Panc1 (cell line): ENCODE measurements at regions of chr9 and their contacts with region 1.

Region 1: DNA sequence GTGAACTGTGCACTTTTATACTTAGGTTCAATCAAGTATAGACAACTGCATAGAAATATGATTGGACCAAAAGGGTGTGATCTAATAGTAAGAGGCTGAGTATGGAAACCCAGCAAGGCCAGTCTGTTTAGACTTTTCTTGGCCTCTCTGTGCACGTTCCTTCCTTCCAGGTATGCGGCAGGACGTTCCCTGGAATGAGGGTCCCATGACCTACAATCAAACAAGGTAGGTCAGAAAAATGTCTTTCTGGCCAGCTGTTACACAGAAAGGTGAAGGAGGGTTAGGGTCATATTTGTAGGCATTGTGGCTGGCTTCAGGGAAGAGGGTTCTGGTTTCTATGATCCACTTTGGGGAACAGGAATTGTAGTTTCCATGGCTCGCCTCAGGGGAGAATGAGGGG is 84.9 kb downstream of the C9orf50 start:
- DNase-seq: no peak
- ATAC-seq: no peak
- H3K4me3 ChIP-seq: no peak overlapping the region
- H3K27ac ChIP-seq: no peak overlapping the region
- H3K4me1 ChIP-seq: no peaks in the 10 kb centered on the region
- H3K27me3 ChIP-seq: no peaks in the 10 kb centered on the region
- CTCF ChIP-seq: no peak

Region 2: DNA sequence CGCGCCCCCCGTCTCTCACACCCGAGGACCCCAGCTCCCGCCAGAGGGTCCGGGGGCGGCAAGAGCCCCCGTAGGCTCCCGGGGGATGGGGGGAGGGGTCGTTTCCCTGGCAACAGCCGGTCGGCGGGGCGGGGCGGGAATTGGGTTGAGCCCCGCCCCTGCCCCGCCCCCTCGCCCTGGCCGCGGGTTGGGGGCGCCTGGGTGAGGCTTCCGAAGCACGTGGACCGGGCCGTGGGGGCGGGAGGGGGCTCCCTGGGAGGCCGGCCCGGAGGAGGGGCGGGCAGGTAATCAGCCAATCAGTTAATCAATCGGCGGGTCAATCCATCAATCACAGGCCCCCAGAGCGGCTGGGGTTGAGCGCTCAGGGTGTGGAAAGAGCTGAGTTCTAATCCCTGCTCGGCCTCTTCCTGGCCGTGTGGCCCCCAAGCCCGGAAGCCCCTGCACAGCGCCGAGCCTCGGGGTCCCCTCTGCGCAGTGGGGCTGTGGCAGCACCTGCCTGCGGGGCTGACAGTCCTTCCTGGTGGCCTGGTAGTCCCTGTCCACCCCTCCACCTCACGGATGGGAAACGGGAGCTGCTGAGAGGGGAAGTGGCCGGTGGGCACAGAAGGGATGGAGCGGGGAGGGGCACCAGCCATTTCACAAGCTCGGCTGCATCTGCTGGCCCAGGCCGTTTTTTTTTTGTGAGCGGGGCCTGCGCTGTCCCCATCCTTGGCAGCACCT is 183.7 kb before region 1 on chr9:
- CTCF ChIA-PET with region 1: no interaction called
- POLR2A ChIA-PET with region 1: interaction called, 13 read pairs
- in situ Hi-C with region 1: no loop called
- intact Hi-C with region 1: no loop called
- DNase-seq: no peak
- ATAC-seq: peak; percentile 2; the same call in 1 of the 2 replicates
- H3K4me3 ChIP-seq: peak overlapping the region; percentile 43 to 48
- H3K27ac ChIP-seq: peak overlapping the region; percentile 88
- H3K4me1 ChIP-seq: peaks cover 29% of the 10 kb centered on the region
- H3K27me3 ChIP-seq: no peaks in the 10 kb centered on the region
- CTCF ChIP-seq: no peak

Region 3: GRCh38 chr9:129380961-129381401 is 155.1 kb before region 1 on chr9:
- CTCF ChIA-PET with region 1: no interaction called
- POLR2A ChIA-PET with region 1: no interaction called
- in situ Hi-C with region 1: no loop called
- intact Hi-C with region 1: no loop called
- DNase-seq: no peak
- ATAC-seq: no peak
- H3K4me3 ChIP-seq: no peak overlapping the region
- H3K27ac ChIP-seq: no peak overlapping the region
- H3K4me1 ChIP-seq: peaks cover 10% of the 10 kb centered on the region
- H3K27me3 ChIP-seq: no peaks in the 10 kb centered on the region
- CTCF ChIP-seq: no peak

Region 4: DNA sequence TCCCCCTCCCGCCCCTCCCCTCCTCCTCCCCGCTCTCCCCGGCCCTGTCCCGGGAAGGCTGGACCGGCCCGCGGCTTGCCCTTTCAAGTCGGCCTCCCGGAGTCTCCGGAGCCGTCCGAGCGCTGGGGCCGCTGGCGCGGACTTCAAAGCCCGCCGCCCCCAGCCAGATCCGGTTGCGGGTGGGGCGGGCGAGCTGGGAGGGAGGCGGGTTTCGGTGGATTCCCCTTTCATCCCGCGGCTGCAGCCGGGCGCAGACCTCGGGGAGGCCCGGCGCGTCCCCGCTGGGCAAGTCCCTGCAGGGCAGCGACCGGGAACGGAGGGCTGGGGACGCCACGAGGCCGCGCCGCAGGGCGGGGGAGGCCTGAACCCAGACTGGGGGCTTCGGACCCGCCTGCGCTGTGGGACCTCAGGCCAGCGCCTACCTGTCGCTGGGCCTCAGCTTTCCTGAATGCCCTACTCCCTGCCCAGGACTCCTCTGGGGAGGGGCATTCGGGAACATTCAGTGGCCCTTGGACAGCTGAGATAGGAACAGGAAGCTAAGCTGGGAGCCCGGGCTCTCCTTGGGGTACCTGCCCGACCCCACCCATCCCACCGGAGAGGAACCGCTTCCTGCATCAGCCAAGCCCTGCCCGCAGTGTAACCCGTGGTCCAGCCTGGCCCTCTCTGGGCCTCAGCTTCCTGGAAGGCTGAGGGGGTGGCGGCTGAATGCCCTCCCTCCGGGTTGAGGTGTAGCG is 61.5 kb after region 1 on chr9:
- CTCF ChIA-PET with region 1: no interaction called
- POLR2A ChIA-PET with region 1: no interaction called
- in situ Hi-C with region 1: no loop called
- intact Hi-C with region 1: loop called (anchors 2 kb)
- DNase-seq: no peak
- ATAC-seq: peak; percentile 75
- H3K4me3 ChIP-seq: peak overlapping the region; percentile 15 to 33; a peak in 3 of 4 replicates
- H3K27ac ChIP-seq: no peak overlapping the region; the same call in 1 of the 2 replicates
- H3K4me1 ChIP-seq: peaks cover 3% of the 10 kb centered on the region
- H3K27me3 ChIP-seq: no peaks in the 10 kb centered on the region
- CTCF ChIP-seq: no peak

Region 5: DNA sequence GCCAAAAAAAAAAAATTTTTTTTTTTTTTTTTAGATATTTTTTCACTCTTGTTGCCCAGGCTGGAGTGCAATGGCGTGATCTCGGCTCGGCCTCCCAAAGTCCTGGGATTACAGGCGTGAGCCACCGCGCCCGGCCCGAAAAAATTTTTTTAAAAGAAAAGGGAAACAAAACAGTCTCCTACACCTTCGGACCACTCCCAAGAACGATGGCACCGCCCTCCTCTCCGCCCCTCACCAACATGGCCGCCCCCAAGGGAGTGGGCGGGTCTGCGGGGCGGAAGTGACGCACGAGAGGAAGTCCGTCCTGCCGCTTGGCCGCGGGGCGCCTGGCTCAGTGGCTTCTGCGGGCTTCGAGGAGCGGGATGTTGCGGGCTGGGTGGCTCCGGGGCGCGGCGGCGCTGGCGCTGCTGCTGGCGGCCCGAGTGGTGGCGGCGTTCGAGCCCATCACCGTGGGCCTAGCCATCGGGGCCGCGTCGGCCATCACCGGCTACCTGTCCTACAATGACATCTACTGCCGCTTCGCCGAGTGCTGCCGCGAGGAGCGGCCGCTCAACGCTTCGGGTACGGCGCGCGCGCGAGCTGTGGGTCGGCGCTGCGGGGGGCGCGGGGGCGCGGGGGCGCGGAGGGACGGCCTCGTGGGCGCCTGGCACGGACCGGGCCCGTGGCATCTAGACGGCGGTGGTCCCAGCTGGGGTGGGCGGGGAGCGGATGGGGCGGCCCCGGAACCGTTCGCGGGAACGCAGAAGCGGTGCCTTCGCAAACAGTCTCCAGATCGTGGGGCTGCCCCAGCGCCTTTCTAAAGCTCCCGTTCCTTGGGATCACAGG is 267.0 kb after region 1 on chr9 and contains the start of gene TOR1B:
- CTCF ChIA-PET with region 1: no interaction called
- POLR2A ChIA-PET with region 1: no interaction called
- in situ Hi-C with region 1: no loop called
- intact Hi-C with region 1: no loop called
- DNase-seq: peak; percentile 51
- ATAC-seq: peak; percentile 99
- H3K4me3 ChIP-seq: peak within 1 kb of the TSS; percentile 68 to 78
- H3K27ac ChIP-seq: peak within 1 kb of the TSS; percentile 79
- H3K4me1 ChIP-seq: peaks cover 3% of the 10 kb centered on the region
- H3K27me3 ChIP-seq: no peaks in the 10 kb centered on the region
- CTCF ChIP-seq: no peak
- total RNA-seq, gene TOR1B: 37.6 TPM